MCF 10A (cell line): ENCODE measurements at regions of chr20 and their contacts with region 1.

Region 1: GRCh38 chr20:17968366-17969279 is at the starts of genes MGME1 and SNX5:
- DNase-seq: peak; percentile 99
- H3K4me3 Mint-ChIP-seq: peak within 1 kb of the TSS; percentile 95
- H3K27ac Mint-ChIP-seq: peak within 1 kb of the TSS; percentile 98
- H3K4me1 Mint-ChIP-seq: peaks cover 39% of the 10 kb centered on the region
- H3K27me3 Mint-ChIP-seq: no peaks in the 10 kb centered on the region
- CTCF ChIP-seq: no peak
- total RNA-seq, gene MGME1: 18.0 and 24.0 TPM in 2 replicates
- total RNA-seq, gene SNX5: 108 and 170 TPM in 2 replicates

Region 2: GRCh38 chr20:17569616-17570346 is 398.8 kb before region 1 on chr20 and contains the start of gene DSTN:
- CTCF ChIA-PET with region 1: interaction called, 3 read pairs
- POLR2A ChIA-PET with region 1: interaction called, 167 read pairs
- intact Hi-C with region 1: no loop called
- DNase-seq: peak; percentile 94
- H3K4me3 Mint-ChIP-seq: peak within 1 kb of the TSS; percentile 94
- H3K27ac Mint-ChIP-seq: peak within 1 kb of the TSS; percentile 99
- H3K4me1 Mint-ChIP-seq: peaks cover 37% of the 10 kb centered on the region
- H3K27me3 Mint-ChIP-seq: no peaks in the 10 kb centered on the region
- CTCF ChIP-seq: no peak
- total RNA-seq, gene DSTN: 217 and 280 TPM in 2 replicates

Region 3: DNA sequence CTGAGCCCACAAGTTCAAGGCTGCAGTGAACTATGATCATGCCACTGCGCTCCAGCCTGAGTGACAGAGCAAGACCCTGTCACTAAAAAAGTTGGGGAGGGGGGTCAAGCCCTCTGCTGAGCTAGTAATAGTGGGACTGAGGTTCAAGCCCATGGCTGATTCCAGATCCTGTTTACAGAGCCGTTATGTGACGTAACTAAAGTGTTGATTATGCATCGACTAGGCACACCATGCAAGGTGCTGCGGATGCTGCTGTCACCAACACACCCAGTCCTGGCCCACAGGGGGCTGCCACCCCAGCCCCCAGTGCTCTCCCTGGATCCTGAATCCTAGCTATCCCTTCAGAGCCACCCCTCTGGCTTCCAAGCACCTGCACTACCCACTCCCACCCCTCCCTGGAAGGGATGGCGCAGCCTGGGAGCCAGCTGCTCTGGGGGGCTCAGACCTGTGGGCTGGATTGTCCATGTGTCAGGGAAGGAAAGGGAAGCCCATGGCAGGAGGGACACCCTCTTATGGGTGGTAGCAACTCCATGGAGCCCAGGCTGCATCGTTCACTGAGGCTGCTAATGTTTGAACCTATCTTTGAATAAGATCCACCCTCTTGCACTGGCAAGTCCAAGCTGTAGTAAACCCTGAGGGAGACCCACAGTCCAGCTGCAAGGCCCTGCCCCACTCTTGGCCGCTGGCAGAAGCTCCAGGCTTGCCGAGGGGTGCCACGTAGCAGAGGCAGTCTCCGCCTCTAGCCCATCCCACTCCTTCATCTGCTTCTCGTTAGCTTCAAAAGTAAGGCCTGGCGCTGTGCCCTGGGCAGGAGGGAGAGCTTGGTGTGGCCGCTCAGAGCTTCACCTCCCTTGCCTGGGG is 95.0 kb before region 1 on chr20:
- CTCF ChIA-PET with region 1: no interaction called
- POLR2A ChIA-PET with region 1: no interaction called
- intact Hi-C with region 1: no loop called
- DNase-seq: peak; percentile 91
- H3K4me3 Mint-ChIP-seq: peak overlapping the region; percentile 46
- H3K27ac Mint-ChIP-seq: peak overlapping the region; percentile 29
- H3K4me1 Mint-ChIP-seq: peaks cover 24% of the 10 kb centered on the region
- H3K27me3 Mint-ChIP-seq: no peaks in the 10 kb centered on the region
- CTCF ChIP-seq: no peak

Region 4: DNA sequence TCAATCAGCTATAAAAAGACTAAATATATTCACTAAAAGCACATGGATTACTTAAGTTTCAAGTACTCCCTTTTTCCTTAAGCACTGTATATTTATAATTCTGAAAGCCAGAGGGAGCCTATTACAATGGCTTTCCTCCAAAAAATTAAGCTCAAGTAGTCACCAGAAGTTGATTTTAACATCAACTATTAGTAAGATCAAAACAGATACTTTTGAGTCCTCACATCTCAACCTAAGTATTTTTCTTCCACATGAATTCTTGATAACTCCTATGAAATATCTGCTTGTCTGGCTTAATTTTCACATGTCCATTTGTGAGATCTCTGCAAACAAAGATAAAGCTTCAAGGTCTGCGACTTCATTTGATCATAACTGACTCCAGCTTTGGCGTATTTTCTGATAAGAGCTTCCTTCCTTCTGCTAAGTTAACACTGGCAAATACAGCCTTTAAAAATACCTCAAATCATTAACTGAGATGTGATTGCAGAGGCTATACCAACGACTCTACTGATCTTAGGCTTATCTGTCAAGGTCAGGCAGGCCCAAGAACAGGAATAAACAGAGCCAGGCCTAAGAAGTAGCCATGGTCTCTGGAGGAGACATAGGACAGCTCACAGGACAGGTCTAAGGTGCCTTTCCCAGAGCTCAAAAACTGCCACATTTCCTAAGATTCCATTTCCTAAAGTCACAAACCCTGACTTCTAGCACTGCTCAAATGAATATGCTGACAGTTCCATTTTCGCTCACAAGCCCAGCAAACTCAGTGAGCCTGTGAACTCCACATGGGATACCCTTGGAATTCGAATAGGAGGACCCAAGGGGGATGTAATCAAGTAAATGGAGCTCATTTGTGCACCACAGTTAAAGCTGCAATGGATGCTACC is 10.0 kb before region 1 on chr20:
- CTCF ChIA-PET with region 1: interaction called, 24 read pairs
- POLR2A ChIA-PET with region 1: interaction called, 139 read pairs
- intact Hi-C with region 1: no loop called
- DNase-seq: no peak
- H3K4me3 Mint-ChIP-seq: no peak overlapping the region
- H3K27ac Mint-ChIP-seq: peak overlapping the region; percentile 82
- H3K4me1 Mint-ChIP-seq: peaks cover 33% of the 10 kb centered on the region
- H3K27me3 Mint-ChIP-seq: no peaks in the 10 kb centered on the region
- CTCF ChIP-seq: no peak

Region 5: DNA sequence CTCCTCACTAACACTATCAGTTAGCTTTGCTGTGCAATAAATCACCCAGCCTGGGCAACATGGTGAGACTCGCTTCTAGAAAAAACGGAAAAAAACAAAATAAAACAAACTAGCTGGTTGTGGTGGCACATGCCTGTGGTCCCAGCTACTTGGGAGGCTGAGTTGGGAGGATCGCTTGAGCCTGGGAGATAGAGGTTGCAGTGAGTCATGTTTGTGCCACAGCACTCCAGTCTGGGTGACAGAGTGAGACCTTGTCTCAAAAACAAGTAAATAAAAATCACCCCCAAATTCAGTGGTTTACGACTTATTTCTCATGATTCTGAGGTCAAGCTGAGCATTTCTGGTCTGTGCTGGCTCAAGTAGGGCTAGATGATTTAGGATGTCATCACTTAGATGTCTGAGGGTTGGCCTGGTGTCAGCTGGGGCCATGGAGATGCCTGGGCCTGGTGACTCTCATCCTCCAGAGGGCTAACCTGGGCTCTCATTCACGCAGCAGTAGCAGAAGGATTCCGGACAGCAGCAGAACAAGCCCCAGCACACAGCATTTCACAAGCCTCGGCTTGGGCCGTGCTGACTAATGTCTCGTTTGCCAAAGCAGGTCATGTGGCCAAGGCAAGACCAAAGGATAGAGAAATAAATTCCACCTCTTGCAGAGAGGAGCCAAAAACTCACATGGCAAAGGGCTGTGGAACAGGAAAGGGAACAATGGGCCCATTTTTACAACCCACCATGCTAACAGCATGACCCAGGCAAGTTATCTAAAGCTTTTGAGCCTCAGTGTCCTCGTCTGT is 32.7 kb after region 1 on chr20:
- CTCF ChIA-PET with region 1: interaction called, 68 read pairs
- POLR2A ChIA-PET with region 1: interaction called, 46 read pairs
- intact Hi-C with region 1: loop called (anchors 1 kb)
- DNase-seq: peak; percentile 94
- H3K4me3 Mint-ChIP-seq: peak overlapping the region; percentile 10
- H3K27ac Mint-ChIP-seq: peak overlapping the region; percentile 33
- H3K4me1 Mint-ChIP-seq: peaks cover 13% of the 10 kb centered on the region
- H3K27me3 Mint-ChIP-seq: no peaks in the 10 kb centered on the region
- CTCF ChIP-seq: no peak

Region 6: DNA sequence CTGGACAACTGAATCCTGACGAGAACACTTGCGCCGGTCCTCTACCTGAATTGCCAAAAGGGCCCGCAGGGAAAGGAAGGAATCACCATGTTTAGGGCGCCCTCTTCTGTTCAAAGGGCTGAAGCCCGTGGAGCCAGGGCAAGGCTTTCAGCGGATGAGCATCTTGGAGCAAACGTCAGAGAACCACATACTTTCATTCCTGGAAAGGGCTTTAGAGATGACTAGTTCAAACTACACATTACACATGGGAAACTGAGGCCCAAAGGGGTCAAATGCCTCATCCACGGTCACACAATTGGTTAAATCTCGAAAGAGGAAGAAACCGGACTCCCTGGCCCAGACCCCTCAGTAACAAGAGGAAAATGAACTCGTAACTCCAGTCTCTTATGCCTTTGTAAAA is 308.2 kb after region 1 on chr20:
- CTCF ChIA-PET with region 1: interaction called, 8 read pairs
- POLR2A ChIA-PET with region 1: interaction called, 3 read pairs
- intact Hi-C with region 1: loop called (anchors 2 kb)
- DNase-seq: peak; percentile 85
- H3K4me3 Mint-ChIP-seq: no peak overlapping the region
- H3K27ac Mint-ChIP-seq: no peak overlapping the region
- H3K4me1 Mint-ChIP-seq: peaks cover 19% of the 10 kb centered on the region
- H3K27me3 Mint-ChIP-seq: peaks cover 12% of the 10 kb centered on the region
- CTCF ChIP-seq: peak; percentile 77